ENCODE measurements at regions of chr7 and their contacts with region 1.

Region 1: GRCh38 chr7:40604601-40605438 is 470.0 kb downstream of the SUGCT start:
- DNase-seq: peak; percentile 44
- ATAC-seq: peak; percentile 49
- H3K4me3 Mint-ChIP-seq: no peak overlapping the region
- H3K27ac Mint-ChIP-seq: no peak overlapping the region
- H3K4me1 Mint-ChIP-seq: peaks cover 3% of the 10 kb centered on the region
- H3K27me3 Mint-ChIP-seq: peaks cover 10% of the 10 kb centered on the region
- CTCF ChIP-seq: peak; percentile 70

Region 2: DNA sequence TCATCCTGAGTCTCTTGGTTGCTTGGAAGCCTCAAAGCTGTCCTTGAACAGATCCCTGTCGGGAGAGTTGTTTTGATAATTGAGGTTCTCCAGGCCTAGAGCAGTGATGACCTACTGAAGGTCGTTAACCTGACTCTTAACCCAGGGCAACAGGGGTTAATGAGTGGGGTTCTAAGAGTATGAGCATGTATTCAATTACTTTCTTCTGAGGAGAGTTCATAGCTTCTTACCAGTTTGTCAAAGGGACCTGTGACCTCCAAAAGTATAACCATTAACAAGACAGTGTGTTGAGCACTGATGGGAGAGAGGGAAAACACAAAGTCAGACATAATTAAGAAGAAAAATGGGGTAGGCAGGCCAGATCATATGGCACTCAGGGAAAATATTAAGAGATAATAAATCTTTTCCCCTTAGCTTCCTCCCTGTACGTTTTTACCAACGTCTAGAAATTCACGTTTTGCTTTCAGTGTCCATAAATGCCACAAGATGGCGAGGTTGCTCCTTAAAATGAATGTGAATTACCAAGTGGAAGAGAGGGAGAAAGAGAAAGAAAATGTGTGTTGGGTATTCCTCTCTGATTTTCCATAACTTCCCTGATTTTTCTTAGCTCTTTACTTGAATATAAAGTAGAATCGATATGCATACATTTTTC is 372.5 kb before region 1 on chr7:
- CTCF ChIA-PET with region 1: interaction called, 26 read pairs
- POLR2A ChIA-PET with region 1: no interaction called
- intact Hi-C with region 1: no loop called
- DNase-seq: peak; percentile 37
- ATAC-seq: no peak
- H3K4me3 Mint-ChIP-seq: no peak overlapping the region
- H3K27ac Mint-ChIP-seq: no peak overlapping the region
- H3K4me1 Mint-ChIP-seq: peaks cover 8% of the 10 kb centered on the region
- H3K27me3 Mint-ChIP-seq: no peaks in the 10 kb centered on the region
- CTCF ChIP-seq: peak; percentile 65

Measured in activated CD8-positive, alpha-beta T cell treated with anti-CD3 and anti-CD28 coated beads for 36 hours (primary cell).